ENCODE measurements at regions of chr17 and their contacts with region 1.

Region 1: DNA sequence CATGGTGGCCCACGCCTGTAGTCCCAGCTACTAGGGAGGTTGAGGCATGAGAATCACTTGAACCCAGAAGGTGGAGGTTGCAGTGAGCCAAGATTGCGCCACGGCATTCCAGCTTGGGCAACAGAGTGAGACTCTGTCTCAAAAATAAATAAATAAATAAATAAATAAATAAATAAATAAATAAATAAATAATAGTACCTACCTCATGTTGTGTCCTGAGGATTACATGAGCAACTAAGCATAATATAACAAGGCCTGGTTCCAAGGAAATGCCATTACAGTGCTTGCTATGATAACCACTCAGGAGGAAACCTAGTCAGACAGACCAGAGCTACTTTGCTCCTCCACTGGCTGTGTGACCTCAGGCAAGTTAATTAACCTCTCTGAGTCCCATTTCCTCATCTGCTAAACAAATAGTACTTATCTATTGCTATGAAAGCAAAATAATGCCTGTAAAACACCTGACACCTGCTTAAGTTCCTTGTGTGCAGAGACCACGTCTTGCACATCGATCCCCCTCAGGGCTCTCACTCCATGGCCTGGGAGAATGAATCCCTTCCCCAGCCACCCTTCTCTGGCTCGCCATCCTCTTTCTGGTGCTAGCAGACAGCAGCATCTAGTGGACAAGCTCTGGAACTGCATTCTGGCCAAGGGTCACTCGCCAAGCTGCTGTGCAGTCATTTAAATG is 7.5 kb downstream of the EPOP start:
- DNase-seq: peak; percentile 64
- H3K4me3 ChIP-seq: no peak overlapping the region
- H3K27ac ChIP-seq: no peak overlapping the region
- H3K4me1 ChIP-seq: no peaks in the 10 kb centered on the region
- H3K27me3 ChIP-seq: peaks cover 4% of the 10 kb centered on the region
- CTCF ChIP-seq: peak; percentile 86

Region 2: GRCh38 chr17:38605888-38606645 is 61.2 kb before region 1 on chr17 and contains the start of gene SRCIN1:
- CTCF ChIA-PET with region 1: no interaction called
- POLR2A ChIA-PET with region 1: no interaction called
- intact Hi-C with region 1: no loop called
- DNase-seq: peak; percentile 47
- H3K4me3 ChIP-seq: peak within 1 kb of the TSS; percentile 49
- H3K27ac ChIP-seq: no peak within 1 kb of the TSS
- H3K4me1 ChIP-seq: peaks cover 15% of the 10 kb centered on the region
- H3K27me3 ChIP-seq: no peaks in the 10 kb centered on the region
- CTCF ChIP-seq: peak; percentile 70
- total RNA-seq, gene SRCIN1: 1.6 and 3.5 TPM in 2 replicates

Region 3: GRCh38 chr17:38636054-38636453 is 31.2 kb before region 1 on chr17:
- CTCF ChIA-PET with region 1: interaction called, 11 read pairs
- POLR2A ChIA-PET with region 1: no interaction called
- intact Hi-C with region 1: no loop called
- DNase-seq: no peak
- H3K4me3 ChIP-seq: no peak overlapping the region
- H3K27ac ChIP-seq: no peak overlapping the region
- H3K4me1 ChIP-seq: no peaks in the 10 kb centered on the region
- H3K27me3 ChIP-seq: no peaks in the 10 kb centered on the region
- CTCF ChIP-seq: no peak

Region 4: GRCh38 chr17:38656959-38657823 is 10.1 kb before region 1 on chr17:
- CTCF ChIA-PET with region 1: no interaction called
- POLR2A ChIA-PET with region 1: no interaction called
- intact Hi-C with region 1: no loop called
- DNase-seq: no peak
- H3K4me3 ChIP-seq: no peak overlapping the region
- H3K27ac ChIP-seq: no peak overlapping the region
- H3K4me1 ChIP-seq: no peaks in the 10 kb centered on the region
- H3K27me3 ChIP-seq: no peaks in the 10 kb centered on the region
- CTCF ChIP-seq: no peak